ENCODE measurements at regions of chr6 and their contacts with region 1.

Region 1: DNA sequence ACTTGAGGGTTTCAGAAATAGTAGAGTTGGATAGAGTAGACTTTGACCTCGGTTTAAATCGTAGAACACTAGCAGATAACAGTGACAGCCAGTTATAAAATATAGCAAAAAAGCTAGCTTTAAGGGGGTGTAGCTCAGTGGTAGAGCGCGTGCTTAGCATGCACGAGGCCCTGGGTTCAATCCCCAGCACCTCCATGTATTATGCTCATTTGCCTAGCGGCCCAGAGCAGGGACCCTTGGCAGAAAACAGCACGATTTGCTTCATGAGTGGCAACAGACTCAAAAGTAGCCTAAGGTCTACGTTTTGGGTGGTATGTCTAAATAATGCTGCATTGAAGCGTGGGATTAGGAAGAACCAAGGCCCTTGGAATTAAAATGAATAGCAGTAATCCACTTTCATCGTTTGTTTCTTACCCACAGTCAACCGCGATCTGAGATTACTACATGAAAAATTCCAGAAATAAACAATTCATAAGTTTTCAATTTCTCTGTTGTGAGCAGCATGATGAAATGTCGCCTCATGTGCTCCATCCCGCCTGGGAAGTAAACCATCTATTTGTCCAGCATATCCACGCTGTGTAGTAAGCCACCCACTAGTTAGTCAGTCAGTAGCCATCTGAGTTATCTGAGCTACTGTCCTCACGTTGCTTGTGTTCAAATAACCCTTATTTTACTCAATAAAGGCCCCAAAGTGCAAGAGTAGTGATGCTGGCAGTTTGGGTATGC is 184.9 kb downstream of the GPX5 start:
- DNase-seq: no peak
- ATAC-seq: no peak

Region 2: DNA sequence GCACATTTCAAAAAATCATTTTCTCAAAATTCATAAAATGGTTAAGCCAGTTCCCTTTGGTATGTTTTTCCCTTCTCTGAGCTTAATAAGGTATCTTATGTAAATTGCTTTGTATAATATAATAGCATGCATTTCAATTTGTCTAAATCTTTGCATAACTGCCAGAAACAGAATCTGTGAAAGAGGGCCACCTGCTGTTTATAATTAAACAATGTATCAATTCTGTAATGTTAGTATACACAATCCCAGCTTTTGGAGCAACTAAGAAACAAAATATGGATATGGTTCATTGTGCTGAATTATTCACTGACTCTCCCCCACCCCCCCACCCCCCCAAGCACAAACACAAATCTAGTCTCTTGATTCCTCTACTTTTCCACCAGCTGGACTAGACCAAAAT is 130.2 kb before region 1 on chr6:
- intact Hi-C with region 1: no loop called
- DNase-seq: no peak
- ATAC-seq: no peak

Region 3: DNA sequence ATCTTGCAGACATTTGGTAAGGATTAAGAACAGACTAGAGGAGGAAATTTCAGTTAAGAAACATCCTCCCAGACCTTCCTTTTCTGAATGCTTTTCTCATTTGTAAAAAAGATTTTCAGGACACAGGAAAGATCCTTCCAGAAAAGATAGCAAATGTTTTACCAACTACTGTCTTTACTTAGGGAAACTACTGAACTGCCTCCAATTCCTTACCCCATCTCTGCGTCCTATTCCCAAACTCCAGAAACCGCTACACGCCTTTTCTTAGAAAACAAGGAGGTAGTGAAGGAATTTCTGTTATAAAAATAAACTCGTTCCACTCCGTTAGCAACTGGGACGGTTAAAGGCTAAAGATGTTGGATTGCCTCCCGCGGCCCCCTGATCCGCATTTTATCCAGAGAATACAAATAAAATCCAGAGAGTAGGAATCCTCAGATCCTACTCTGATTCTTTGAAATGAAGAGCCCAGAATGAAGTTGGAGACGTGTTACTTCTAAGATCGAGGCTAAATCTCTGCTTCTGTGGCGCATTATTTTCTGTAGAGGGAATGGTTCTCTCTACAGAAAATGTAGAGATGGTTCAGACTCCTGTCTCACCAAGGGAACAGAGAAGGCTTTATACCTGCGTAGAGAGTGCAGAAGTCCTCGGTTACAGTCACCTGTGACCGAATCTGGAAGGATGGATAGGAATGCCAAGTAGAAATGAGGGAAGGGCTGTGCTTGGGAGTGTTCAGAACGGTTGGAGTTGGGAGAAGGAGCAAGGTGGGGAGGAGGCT is 52.0 kb before region 1 on chr6:
- intact Hi-C with region 1: no loop called
- DNase-seq: no peak
- ATAC-seq: no peak

Region 4: GRCh38 chr6:28747631-28748157 is 37.1 kb after region 1 on chr6:
- intact Hi-C with region 1: loop called (anchors 2 kb)
- DNase-seq: no peak
- ATAC-seq: no peak

Measured in Right ventricle myocardium superior (tissue), 1 donor.